MCF 10A (cell line): ENCODE measurements at regions of chr17 and their contacts with region 1.

Region 1: GRCh38 chr17:77098884-77099545 is 41.8 kb upstream of the SEC14L1 start:
- DNase-seq: peak; percentile 69
- H3K4me3 Mint-ChIP-seq: no peak overlapping the region
- H3K27ac Mint-ChIP-seq: no peak overlapping the region
- H3K4me1 Mint-ChIP-seq: peaks cover 5% of the 10 kb centered on the region
- H3K27me3 Mint-ChIP-seq: no peaks in the 10 kb centered on the region
- CTCF ChIP-seq: no peak

Region 2: DNA sequence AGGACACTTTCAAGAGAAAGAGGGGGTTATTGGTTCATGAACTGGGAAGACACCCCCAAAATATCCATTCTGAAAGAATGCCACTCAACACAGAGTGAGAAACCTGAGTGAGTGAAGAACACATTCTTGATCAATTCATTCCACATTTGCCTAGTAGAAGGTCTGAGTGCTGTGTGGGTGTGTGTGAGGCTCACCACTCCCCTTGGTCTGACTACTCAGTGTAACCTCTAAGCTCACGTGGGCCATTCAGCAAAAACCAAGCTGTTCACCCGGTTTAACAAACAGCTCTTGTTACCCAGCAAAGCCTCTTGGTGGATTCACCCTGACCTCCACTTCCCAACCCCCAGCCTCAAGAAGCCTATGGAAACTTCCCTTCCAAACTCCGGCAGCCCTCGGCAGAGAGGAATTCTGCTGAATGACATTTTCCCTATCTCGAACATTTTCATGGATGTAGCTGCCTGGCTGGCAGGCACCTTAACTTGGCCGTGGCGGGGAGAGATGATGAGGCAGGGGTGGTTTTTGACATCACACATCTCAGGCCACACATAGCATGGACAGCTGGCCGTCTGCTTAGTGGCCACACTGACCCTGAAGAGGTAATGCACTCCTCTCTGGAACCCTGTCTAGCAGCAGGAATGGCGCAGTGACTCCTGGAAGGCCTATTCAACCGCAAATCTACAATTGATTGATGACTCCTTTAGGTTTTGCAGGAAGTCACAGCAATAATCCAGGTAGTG is 467.0 kb before region 1 on chr17:
- CTCF ChIA-PET with region 1: no interaction called
- POLR2A ChIA-PET with region 1: no interaction called
- intact Hi-C with region 1: no loop called
- DNase-seq: no peak
- H3K4me3 Mint-ChIP-seq: no peak overlapping the region
- H3K27ac Mint-ChIP-seq: no peak overlapping the region
- H3K4me1 Mint-ChIP-seq: no peaks in the 10 kb centered on the region
- H3K27me3 Mint-ChIP-seq: no peaks in the 10 kb centered on the region
- CTCF ChIP-seq: no peak

Region 3: GRCh38 chr17:77027271-77027670 is 71.7 kb before region 1 on chr17:
- CTCF ChIA-PET with region 1: no interaction called
- POLR2A ChIA-PET with region 1: no interaction called
- intact Hi-C with region 1: no loop called
- DNase-seq: no peak
- H3K4me3 Mint-ChIP-seq: no peak overlapping the region
- H3K27ac Mint-ChIP-seq: no peak overlapping the region
- H3K4me1 Mint-ChIP-seq: no peaks in the 10 kb centered on the region
- H3K27me3 Mint-ChIP-seq: no peaks in the 10 kb centered on the region
- CTCF ChIP-seq: no peak

Region 4: DNA sequence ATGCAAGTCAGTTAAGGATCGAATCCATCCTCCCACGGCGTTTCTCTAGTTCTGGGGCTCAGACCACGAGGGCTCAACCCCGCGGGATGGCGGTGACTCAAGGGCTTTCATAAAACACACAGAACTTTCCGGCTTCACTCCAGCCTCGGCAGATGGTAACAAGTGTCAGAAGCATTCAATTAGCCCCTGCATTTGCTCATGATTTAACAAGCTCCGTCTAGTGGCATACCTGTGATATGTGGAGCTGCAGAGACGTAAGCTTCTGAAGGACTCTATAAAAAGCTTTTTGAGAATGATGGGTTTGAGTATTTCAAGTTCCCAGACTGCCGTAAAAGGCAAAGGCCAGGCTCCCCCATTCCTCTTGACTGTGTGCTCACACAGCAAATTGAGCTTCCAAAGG is 49.6 kb before region 1 on chr17:
- CTCF ChIA-PET with region 1: no interaction called
- POLR2A ChIA-PET with region 1: no interaction called
- intact Hi-C with region 1: no loop called
- DNase-seq: no peak
- H3K4me3 Mint-ChIP-seq: no peak overlapping the region
- H3K27ac Mint-ChIP-seq: no peak overlapping the region
- H3K4me1 Mint-ChIP-seq: peaks cover 9% of the 10 kb centered on the region
- H3K27me3 Mint-ChIP-seq: peaks cover 6% of the 10 kb centered on the region
- CTCF ChIP-seq: no peak

Region 5: GRCh38 chr17:77127735-77128361 is 28.8 kb after region 1 on chr17:
- CTCF ChIA-PET with region 1: interaction called, 5 read pairs
- POLR2A ChIA-PET with region 1: interaction called, 13 read pairs
- intact Hi-C with region 1: no loop called
- DNase-seq: peak; percentile 93
- H3K4me3 Mint-ChIP-seq: peak overlapping the region; percentile 55
- H3K27ac Mint-ChIP-seq: peak overlapping the region; percentile 46
- H3K4me1 Mint-ChIP-seq: peaks cover 40% of the 10 kb centered on the region
- H3K27me3 Mint-ChIP-seq: no peaks in the 10 kb centered on the region
- CTCF ChIP-seq: no peak